ENCODE measurements at regions of chr6 and their contacts with region 1.

Region 1: DNA sequence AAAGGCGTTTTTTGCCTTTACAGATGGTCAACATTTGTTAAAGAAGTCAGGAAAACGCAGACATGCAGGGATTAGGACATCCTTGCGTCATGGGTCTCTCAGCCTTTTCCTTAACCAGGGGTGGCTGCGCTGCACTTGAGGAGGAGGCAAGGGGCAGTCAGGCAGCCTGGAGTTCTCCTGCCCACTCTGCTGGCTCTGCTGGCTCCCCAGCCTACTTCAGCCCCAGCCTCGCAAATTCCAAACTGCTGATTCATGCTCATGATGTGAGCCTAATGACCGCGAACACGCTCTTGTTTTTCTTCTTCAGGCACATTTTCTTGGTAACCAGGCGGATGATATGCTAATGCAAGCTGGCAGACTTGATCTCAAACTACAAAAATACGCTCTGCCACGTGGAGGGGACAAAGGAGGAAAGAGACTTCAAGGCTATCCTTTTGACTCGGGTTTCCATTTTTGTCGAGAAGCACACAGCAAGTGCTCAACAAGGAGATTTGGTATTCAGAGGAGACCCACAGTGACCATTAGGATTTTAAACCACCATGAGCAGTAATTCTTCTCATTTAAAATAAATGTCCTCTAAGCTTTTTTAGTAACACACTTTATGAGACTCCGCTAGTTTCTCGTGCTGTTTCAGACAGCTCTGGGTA is 290.3 kb upstream of the STXBP5 start:
- DNase-seq: peak; percentile 77 to 94 (median 82)
- ATAC-seq: peak; percentile 86
- H3K4me3 ChIP-seq: peak overlapping the region; percentile 10; the same call in 1 of the 2 replicates
- H3K27ac ChIP-seq: peak overlapping the region; percentile 96
- H3K4me1 ChIP-seq: peaks cover 4 to 85% of the 10 kb centered on the region in 2 experiments; a peak in 4 of 5 replicates
- H3K27me3 ChIP-seq: no peaks in the 10 kb centered on the region
- CTCF ChIP-seq: no peak
- EP300 ChIP-seq: no peak; the same call in 1 of the 2 replicates
- POLR2A ChIP-seq: peak; percentile 73
- RAD21 ChIP-seq: peak in 1 of 2 experiments; percentile 39; a peak in 3 of 4 replicates

Region 2: GRCh38 chr6:146884728-146885127 is 29.2 kb before region 1 on chr6:
- CTCF ChIA-PET with region 1: no interaction called
- POLR2A ChIA-PET with region 1: interaction called, 3 read pairs
- in situ Hi-C with region 1: no loop called
- intact Hi-C with region 1: loop called (anchors 2 kb)
- DNase-seq: peak in 1 of 4 experiments; percentile 75
- ATAC-seq: peak; percentile 27
- H3K4me3 ChIP-seq: peak overlapping the region; percentile 31
- H3K27ac ChIP-seq: peak overlapping the region; percentile 89
- H3K4me1 ChIP-seq: peaks cover 45 to 83% of the 10 kb centered on the region in 2 experiments
- H3K27me3 ChIP-seq: no peaks in the 10 kb centered on the region
- CTCF ChIP-seq: no peak; a peak in 1 of 6 replicates
- EP300 ChIP-seq: no peak
- POLR2A ChIP-seq: no peak
- RAD21 ChIP-seq: no peak

Region 3: GRCh38 chr6:146925846-146926245 is 11.9 kb after region 1 on chr6:
- CTCF ChIA-PET with region 1: no interaction called
- POLR2A ChIA-PET with region 1: interaction called, 10 read pairs
- in situ Hi-C with region 1: no loop called
- intact Hi-C with region 1: no loop called
- DNase-seq: no peak
- ATAC-seq: no peak
- H3K4me3 ChIP-seq: no peak overlapping the region
- H3K27ac ChIP-seq: no peak overlapping the region
- H3K4me1 ChIP-seq: peaks cover 0 to 4% of the 10 kb centered on the region in 2 experiments; a peak in 3 of 5 replicates
- H3K27me3 ChIP-seq: no peaks in the 10 kb centered on the region
- CTCF ChIP-seq: no peak
- EP300 ChIP-seq: no peak
- POLR2A ChIP-seq: no peak
- RAD21 ChIP-seq: no peak

Region 4: GRCh38 chr6:146985111-146985510 is 71.1 kb after region 1 on chr6:
- CTCF ChIA-PET with region 1: no interaction called
- POLR2A ChIA-PET with region 1: no interaction called
- in situ Hi-C with region 1: no loop called
- intact Hi-C with region 1: loop called (anchors 5 kb)
- DNase-seq: peak; percentile 28 to 46 (median 36)
- ATAC-seq: peak; percentile 93
- H3K4me3 ChIP-seq: no peak overlapping the region
- H3K27ac ChIP-seq: no peak overlapping the region
- H3K4me1 ChIP-seq: peaks cover 0 to 5% of the 10 kb centered on the region in 2 experiments; a peak in 2 of 5 replicates
- H3K27me3 ChIP-seq: no peaks in the 10 kb centered on the region
- CTCF ChIP-seq: no peak
- EP300 ChIP-seq: no peak
- POLR2A ChIP-seq: no peak
- RAD21 ChIP-seq: no peak

Region 5: DNA sequence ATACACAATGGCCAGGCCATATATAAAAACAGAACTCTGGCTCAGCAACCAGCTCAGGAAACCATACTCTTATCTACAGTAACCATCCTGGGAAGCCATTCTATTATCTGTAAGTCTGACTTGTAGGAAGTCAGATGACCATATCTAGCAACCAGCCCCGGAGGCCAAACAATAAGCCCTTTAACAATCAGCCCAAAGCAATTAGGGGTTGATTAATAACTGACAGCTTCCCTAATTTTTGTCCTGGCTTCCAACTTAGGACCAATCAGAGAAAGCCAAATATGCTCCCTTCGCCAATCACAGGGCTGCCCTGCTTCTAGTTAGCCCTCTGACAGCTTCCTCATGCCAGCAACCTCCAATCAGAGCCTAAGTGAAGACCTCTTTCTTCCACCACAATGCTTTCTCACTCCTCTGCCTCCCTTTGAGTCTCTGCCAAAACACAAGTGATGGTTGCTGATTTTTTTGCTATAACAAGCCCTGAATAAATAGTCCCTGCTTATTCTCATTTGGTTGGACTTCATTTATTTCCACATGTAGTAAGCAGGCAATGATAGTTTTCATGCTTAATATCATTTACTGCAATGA is 252.5 kb after region 1 on chr6:
- CTCF ChIA-PET with region 1: no interaction called
- POLR2A ChIA-PET with region 1: interaction called, 3 read pairs
- in situ Hi-C with region 1: no loop called
- intact Hi-C with region 1: loop called (anchors 5 kb)
- DNase-seq: peak; percentile 68 to 92 (median 78)
- ATAC-seq: peak; percentile 84
- H3K4me3 ChIP-seq: no peak overlapping the region
- H3K27ac ChIP-seq: peak overlapping the region; percentile 79
- H3K4me1 ChIP-seq: peaks cover 6 to 29% of the 10 kb centered on the region in 2 experiments
- H3K27me3 ChIP-seq: no peaks in the 10 kb centered on the region
- CTCF ChIP-seq: no peak
- EP300 ChIP-seq: peak; percentile 94
- POLR2A ChIP-seq: no peak
- RAD21 ChIP-seq: peak; percentile 29 to 36; a peak in 2 of 4 replicates

Region 6: DNA sequence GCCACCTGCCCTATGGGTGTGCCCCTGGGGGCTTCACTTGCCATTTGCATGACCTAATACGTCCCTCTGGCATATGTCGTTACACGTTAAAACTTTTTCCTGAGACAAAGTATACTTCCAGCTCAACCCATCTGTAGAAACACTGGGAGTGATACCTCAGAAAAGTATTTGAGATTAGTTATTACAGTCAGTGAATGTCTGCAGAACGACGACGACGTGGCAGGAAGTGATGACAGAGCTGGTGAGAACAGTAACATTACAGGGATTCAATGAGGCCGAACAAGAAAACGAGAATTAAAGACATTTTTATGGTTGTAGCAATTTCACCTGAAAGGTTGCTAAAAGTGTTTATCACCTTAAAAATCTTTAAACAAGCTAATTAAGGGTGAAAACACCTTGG is 1468.9 kb after region 1 on chr6:
- CTCF ChIA-PET with region 1: no interaction called
- POLR2A ChIA-PET with region 1: no interaction called
- in situ Hi-C with region 1: no loop called
- intact Hi-C with region 1: no loop called
- DNase-seq: no peak
- ATAC-seq: no peak
- H3K4me3 ChIP-seq: no peak overlapping the region
- H3K27ac ChIP-seq: no peak overlapping the region
- H3K4me1 ChIP-seq: no peaks in the 10 kb centered on the region
- H3K27me3 ChIP-seq: peaks cover 37 to 43% of the 10 kb centered on the region in 2 experiments
- CTCF ChIP-seq: no peak
- EP300 ChIP-seq: no peak
- POLR2A ChIP-seq: no peak
- RAD21 ChIP-seq: no peak